Left colon (tissue), 2 donors: ENCODE measurements at regions of chr3 and their contacts with region 1.

Region 1: DNA sequence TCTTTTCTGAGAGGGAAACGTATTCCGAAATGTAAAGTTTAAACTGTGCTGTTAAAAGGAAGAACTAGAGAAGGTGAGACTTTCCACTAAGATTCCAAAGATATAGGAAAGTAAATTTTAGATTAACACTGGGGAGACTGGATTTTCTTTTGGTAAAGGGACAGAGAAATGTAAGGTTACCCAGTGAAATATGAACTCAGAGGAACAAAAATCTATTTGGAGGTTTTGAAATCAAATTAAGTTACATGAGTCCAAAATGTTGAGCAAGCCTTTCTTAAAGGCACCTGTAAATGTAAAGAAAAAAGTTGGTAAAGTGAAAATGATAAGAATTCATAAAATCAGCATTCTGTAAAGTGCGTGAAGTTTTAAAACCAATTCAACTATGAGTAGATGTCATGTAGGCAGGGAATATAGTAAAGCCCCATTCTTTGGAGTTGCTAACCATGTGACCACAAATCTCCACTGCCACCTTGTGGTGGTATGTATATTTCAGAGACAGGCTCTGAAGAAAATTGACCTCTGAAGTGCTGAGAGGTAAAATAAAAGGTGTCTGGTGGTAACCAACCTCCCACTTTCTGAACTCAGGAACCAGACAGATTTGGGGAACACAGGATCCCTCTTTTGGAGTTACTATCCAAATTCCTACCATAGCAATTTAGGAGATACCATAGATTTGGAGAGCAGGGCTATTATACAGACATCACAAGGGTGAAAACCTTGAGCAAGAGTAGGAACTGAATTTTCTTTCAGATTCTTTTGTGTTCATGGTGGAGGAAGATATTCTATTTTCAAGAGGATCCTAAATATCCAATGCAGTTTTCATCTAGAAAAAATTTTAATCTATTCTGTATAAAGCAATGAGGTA is 215.3 kb downstream of the ROBO2 start:
- DNase-seq: no peak
- ATAC-seq: peak; percentile 62

Region 2: GRCh38 chr3:77038468-77038929 is 216.7 kb before region 1 on chr3:
- intact Hi-C with region 1: loop called in 1 of 2 experiments (anchors 5 kb)
- DNase-seq: peak; percentile 29 to 46
- ATAC-seq: peak; percentile 94